ENCODE measurements at regions of chr3 and their contacts with region 1.

Region 1: GRCh38 chr3:136110481-136110880 is 85.7 kb downstream of the MSL2 start:
- DNase-seq: no peak
- H3K4me3 ChIP-seq: no peak overlapping the region
- H3K27ac ChIP-seq: no peak overlapping the region
- H3K4me1 ChIP-seq: no peaks in the 10 kb centered on the region
- H3K27me3 ChIP-seq: no peaks in the 10 kb centered on the region
- CTCF ChIP-seq: no peak

Region 2: DNA sequence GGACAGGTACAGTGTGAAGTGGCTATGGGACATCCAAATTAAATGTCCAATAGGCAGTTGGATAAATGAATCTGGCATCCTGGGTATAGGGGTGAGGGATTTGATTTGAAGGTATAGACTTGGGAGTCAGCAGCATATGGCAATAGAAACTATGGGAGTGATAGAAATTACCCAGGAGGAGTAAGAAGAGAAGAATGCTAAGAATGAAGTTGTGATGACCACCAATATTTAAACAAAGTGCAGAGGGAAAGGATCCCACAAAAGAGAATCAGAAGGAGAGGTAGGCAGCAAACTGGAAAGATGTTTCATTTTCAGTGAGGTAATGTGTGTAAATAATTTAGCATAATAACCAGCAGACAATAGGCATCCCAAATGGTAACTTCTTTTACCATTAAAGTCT is 99.4 kb after region 1 on chr3:
- CTCF ChIA-PET with region 1: no interaction called
- POLR2A ChIA-PET with region 1: interaction called, 10 read pairs
- intact Hi-C with region 1: no loop called
- DNase-seq: no peak
- H3K4me3 ChIP-seq: no peak overlapping the region
- H3K27ac ChIP-seq: no peak overlapping the region
- H3K4me1 ChIP-seq: peaks cover 13% of the 10 kb centered on the region
- H3K27me3 ChIP-seq: no peaks in the 10 kb centered on the region
- CTCF ChIP-seq: no peak

Region 3: DNA sequence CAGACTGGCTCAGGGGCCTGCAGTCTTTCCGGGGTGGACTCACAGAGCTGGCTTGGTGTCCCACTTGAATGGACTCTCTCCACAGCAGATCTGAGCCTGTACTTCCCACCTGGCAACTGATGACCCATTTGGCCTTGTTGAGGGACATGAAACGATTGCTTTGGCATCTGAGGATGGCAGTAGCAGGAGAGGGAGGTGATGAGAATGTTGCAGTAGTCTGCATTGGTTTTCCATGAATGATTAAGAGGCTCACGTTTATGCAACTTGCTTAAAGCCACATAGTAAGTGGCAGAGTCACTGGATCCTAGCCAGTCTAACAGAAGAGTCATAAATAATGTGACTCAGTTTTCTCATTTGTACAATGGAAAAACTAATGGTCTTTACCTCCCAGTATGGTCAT is 869.2 kb after region 1 on chr3:
- CTCF ChIA-PET with region 1: no interaction called
- POLR2A ChIA-PET with region 1: no interaction called
- intact Hi-C with region 1: no loop called
- DNase-seq: no peak
- H3K4me3 ChIP-seq: no peak overlapping the region
- H3K27ac ChIP-seq: no peak overlapping the region
- H3K4me1 ChIP-seq: peaks cover 8% of the 10 kb centered on the region
- H3K27me3 ChIP-seq: no peaks in the 10 kb centered on the region
- CTCF ChIP-seq: no peak

Measured in A673 (cell line).